Activated naive CD4-positive, alpha-beta T cell treated with anti-CD3 and anti-CD28 coated beads, Interleukin-2, amount 10 ng/mL, durations not matched to agents 7 days and 5 days (primary cell): ENCODE measurements at regions of chr7 and their contacts with region 1.

Region 1: DNA sequence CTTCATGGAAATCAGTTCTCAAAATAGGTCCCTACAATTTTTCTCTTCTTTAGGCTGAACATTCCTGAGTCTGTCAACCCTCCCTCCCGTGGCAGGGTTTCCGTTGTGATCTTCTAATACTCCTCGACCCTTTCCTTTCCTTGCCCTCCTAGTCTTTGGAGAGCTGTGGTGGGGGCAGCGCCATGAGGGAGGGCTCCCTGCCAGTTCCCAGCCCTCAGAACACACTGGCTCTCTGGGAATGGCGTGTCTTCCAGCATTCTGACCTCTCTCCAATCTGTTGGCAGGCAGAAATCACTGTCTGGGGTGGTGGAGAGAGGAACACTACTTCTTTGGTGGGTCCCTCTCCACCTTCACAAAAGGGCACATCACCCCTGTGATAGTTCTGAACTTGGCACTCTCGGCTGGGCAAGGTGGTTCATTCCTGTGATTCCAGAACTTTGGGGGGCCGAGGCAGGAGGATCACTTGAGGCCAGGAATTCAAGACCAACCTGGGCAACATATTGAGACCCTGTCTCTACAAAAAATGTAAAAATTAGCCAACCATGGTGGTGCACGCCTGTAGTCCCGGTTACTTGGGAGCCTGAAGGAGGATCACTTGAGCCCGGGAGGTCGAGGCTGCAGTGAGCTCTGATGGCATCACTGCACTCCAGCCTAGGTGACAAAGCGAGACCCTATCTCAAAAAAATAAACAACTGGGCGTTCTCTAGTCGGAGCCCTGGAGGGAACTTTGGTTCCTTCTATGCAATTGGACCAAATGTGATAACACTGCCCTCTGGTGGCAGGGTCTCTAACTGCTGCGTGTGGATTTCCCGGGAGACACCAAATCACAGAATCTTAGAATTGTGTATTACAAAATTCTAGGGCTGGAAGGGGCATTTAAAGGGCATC is 13.1 kb upstream of the ARPC1A start:
- DNase-seq: peak; percentile 81
- H3K4me3 Mint-ChIP-seq: peak overlapping the region; percentile 31
- H3K27ac Mint-ChIP-seq: no peak overlapping the region
- H3K4me1 Mint-ChIP-seq: peaks cover 23% of the 10 kb centered on the region
- H3K27me3 Mint-ChIP-seq: peaks cover 30% of the 10 kb centered on the region

Region 2: GRCh38 chr7:99040104-99040958 is 272.2 kb before region 1 on chr7:
- CTCF ChIA-PET with region 1: interaction called, 76 read pairs
- DNase-seq: peak; percentile 70
- H3K4me3 Mint-ChIP-seq: no peak overlapping the region
- H3K27ac Mint-ChIP-seq: peak overlapping the region; percentile 47
- H3K4me1 Mint-ChIP-seq: no peaks in the 10 kb centered on the region
- H3K27me3 Mint-ChIP-seq: no peaks in the 10 kb centered on the region

Region 3: DNA sequence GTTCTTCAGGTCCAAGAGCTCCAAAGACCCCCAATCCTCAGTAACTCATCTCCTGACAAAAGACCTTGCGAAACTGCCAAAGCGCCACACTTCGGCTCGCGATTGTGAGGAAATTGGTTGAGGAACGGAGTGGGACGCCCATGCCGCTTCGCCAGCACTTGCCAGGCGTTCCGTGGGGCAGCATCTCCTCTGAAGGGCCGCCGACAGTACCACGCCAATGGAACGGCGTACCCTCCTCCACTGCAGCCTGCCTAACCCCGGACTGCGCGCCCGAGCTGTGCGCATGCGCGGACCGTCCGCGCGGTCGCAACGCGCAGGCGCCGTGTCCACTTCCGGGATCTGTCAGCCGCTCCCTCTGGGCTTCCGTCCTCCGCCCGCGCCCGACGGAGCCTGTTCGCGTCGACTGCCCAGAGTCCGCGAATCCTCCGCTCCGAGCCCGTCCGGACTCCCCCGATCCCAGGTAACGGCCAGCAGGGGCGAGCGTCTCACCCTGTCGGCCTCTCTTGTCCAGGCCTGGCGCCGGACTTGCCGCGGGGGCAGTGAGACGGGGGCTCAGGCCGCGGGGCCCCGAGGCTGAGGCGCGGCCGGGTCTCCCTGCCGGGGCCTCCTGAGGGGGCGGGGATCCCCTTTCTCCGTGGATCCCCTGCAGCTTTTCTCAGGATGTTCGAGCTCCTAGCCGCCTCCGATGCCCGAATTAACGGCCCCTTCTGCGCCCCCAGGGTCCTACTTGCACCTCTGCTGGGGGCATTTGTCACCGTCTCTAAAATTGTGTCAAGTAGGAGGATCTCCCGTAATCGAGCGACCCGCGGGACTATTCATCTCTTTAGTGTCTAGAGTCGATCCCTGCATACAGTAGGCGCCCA is 13.2 kb after region 1 on chr7 and contains the start of gene ARPC1A:
- CTCF ChIA-PET with region 1: interaction called, 17 read pairs
- DNase-seq: peak; percentile 91
- H3K4me3 Mint-ChIP-seq: peak within 1 kb of the TSS; percentile 77
- H3K27ac Mint-ChIP-seq: peak within 1 kb of the TSS; percentile 39
- H3K4me1 Mint-ChIP-seq: peaks cover 41% of the 10 kb centered on the region
- H3K27me3 Mint-ChIP-seq: peaks cover 8% of the 10 kb centered on the region